Naive thymus-derived CD4-positive, alpha-beta T cell (primary cell): ENCODE measurements at regions of chr5 and their contacts with region 1.

Region 1: DNA sequence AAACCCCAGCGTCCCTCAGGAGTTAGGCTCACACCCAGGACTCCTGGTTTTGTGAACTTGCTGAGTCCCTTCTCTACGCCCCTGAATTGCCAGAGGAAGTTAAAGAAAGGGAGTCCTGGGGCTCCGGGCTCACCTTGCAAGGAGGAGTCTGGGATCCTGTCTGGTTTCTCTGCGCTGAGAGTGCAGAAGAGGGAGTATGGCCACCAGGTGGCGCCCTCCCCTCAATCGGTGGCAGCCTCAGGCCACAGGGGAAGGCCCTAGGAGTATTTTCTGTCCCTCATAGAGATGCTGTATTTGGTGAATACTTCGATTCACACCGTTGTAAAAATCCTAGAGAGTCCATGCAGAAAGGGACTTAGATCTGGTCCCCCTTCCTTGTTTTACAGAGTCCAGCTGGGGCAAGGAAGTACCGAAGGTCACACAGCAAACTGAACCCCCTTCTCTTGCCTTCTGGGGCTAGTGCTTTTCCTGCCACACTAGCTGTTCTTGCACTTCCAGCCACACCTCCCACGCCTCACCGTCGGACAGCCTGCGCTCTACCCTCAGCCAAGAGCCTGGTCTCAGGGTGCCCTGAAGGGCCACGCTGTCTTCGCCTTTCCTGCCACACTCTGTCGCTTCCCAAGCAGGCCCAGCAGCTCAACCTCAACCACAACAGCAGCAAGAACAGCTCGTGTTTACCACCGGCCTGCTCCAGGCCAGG is 10.2 kb downstream of the HAND1 start:
- DNase-seq: peak; percentile 20 to 81 (median 57)
- ATAC-seq: peak; percentile 88
- H3K4me3 ChIP-seq: no peak overlapping the region
- H3K4me3 Mint-ChIP-seq: no peak overlapping the region
- H3K27ac ChIP-seq: no peak overlapping the region
- H3K27ac Mint-ChIP-seq: peak overlapping the region in 1 of 9 donors; percentile 12
- H3K4me1 ChIP-seq: peaks cover 0 to 5% of the 10 kb centered on the region in 2 donors
- H3K4me1 Mint-ChIP-seq: peaks cover 0 to 14% (median 3%) of the 10 kb centered on the region in 7 donors
- H3K27me3 ChIP-seq: peaks cover under 1 to 13% of the 10 kb centered on the region in 2 donors
- H3K27me3 Mint-ChIP-seq: peaks cover 30 to 60% (median 40%) of the 10 kb centered on the region in 5 donors

Region 2: GRCh38 chr5:154358516-154359220 is 109.1 kb before region 1 on chr5:
- CTCF ChIA-PET with region 1: no interaction called
- POLR2A ChIA-PET with region 1: no interaction called
- intact Hi-C with region 1: no loop called
- DNase-seq: no peak
- ATAC-seq: no peak
- H3K4me3 ChIP-seq: no peak overlapping the region
- H3K4me3 Mint-ChIP-seq: no peak overlapping the region
- H3K27ac ChIP-seq: no peak overlapping the region
- H3K27ac Mint-ChIP-seq: no peak overlapping the region
- H3K4me1 ChIP-seq: no peaks in the 10 kb centered on the region
- H3K4me1 Mint-ChIP-seq: peaks cover 0 to 27% (median 0%) of the 10 kb centered on the region in 7 donors
- H3K27me3 ChIP-seq: no peaks in the 10 kb centered on the region
- H3K27me3 Mint-ChIP-seq: no peaks in the 10 kb centered on the region

Region 3: GRCh38 chr5:154610321-154611154 is 142.7 kb after region 1 on chr5:
- CTCF ChIA-PET with region 1: no interaction called
- POLR2A ChIA-PET with region 1: no interaction called
- intact Hi-C with region 1: loop called (anchors 1 kb)
- DNase-seq: peak in 7 of 9 donors; percentile 8 to 73 (median 21)
- ATAC-seq: peak; percentile 76
- H3K4me3 ChIP-seq: no peak overlapping the region
- H3K4me3 Mint-ChIP-seq: peak overlapping the region in 7 of 10 donors; percentile 35 to 71 (median 65)
- H3K27ac ChIP-seq: no peak overlapping the region
- H3K27ac Mint-ChIP-seq: no peak overlapping the region
- H3K4me1 ChIP-seq: no peaks in the 10 kb centered on the region
- H3K4me1 Mint-ChIP-seq: peaks cover 0 to 18% (median 14%) of the 10 kb centered on the region in 7 donors
- H3K27me3 ChIP-seq: no peaks in the 10 kb centered on the region
- H3K27me3 Mint-ChIP-seq: peaks cover 34 to 70% (median 66%) of the 10 kb centered on the region in 5 donors